Activated CD4-positive, alpha-beta memory T cell treated with anti-CD3 and anti-CD28 coated beads for 36 hours (primary cell): ENCODE measurements at regions of chr12 and their contacts with region 1.

Region 1: DNA sequence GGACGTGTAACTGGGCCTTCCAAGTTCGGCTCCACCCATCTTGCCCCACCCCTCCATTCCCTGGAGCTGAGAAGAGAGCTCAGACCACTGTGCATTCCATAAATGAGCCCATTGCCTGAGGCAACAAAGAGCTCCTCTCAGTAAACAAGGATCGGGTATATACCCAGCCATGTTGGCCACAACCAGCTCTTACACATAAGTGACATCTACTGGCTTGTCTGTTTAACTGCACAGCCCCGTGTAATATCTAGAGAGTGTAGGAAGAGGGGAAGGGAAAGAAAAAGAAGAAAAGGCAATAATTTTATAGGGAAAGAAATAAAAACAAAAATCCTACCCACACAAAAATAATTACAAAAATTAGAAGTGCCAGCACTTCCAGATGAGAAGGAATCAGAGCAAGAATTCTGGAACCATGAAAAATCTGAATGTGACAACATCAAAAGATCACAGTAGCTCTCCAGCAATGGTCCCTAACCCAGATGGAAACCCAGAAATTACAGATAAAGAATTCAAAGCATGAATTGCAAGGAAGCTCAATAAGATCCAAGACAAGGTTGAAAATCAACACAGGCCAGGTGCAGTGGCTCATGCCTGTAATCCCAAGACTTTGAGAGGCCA is 308.1 kb downstream of the RPAP3 start:
- DNase-seq: peak; percentile 64
- H3K4me3 Mint-ChIP-seq: peak overlapping the region; percentile 45
- H3K27ac Mint-ChIP-seq: peak overlapping the region; percentile 100
- H3K4me1 Mint-ChIP-seq: peaks cover 89% of the 10 kb centered on the region
- H3K27me3 Mint-ChIP-seq: no peaks in the 10 kb centered on the region

Region 2: GRCh38 chr12:47032644-47033043 is 365.1 kb before region 1 on chr12:
- CTCF ChIA-PET with region 1: interaction called, 86 read pairs
- POLR2A ChIA-PET with region 1: no interaction called
- intact Hi-C with region 1: loop called (anchors 1 kb)
- DNase-seq: no peak
- H3K4me3 Mint-ChIP-seq: no peak overlapping the region
- H3K27ac Mint-ChIP-seq: no peak overlapping the region
- H3K4me1 Mint-ChIP-seq: peaks cover 37% of the 10 kb centered on the region
- H3K27me3 Mint-ChIP-seq: no peaks in the 10 kb centered on the region

Region 3: GRCh38 chr12:47085815-47086252 is 311.9 kb before region 1 on chr12:
- CTCF ChIA-PET with region 1: interaction called, 25 read pairs
- POLR2A ChIA-PET with region 1: no interaction called
- intact Hi-C with region 1: loop called (anchors 2 kb)
- DNase-seq: peak; percentile 59
- H3K4me3 Mint-ChIP-seq: peak overlapping the region; percentile 47
- H3K27ac Mint-ChIP-seq: peak overlapping the region; percentile 69
- H3K4me1 Mint-ChIP-seq: peaks cover 51% of the 10 kb centered on the region
- H3K27me3 Mint-ChIP-seq: no peaks in the 10 kb centered on the region

Region 4: GRCh38 chr12:47276621-47277309 is 121.0 kb before region 1 on chr12:
- CTCF ChIA-PET with region 1: interaction called, 5 read pairs
- POLR2A ChIA-PET with region 1: interaction called, 4 read pairs
- intact Hi-C with region 1: loop called (anchors 2 kb)
- DNase-seq: peak; percentile 70
- H3K4me3 Mint-ChIP-seq: peak overlapping the region; percentile 33
- H3K27ac Mint-ChIP-seq: peak overlapping the region; percentile 95
- H3K4me1 Mint-ChIP-seq: peaks cover 82% of the 10 kb centered on the region
- H3K27me3 Mint-ChIP-seq: no peaks in the 10 kb centered on the region

Region 5: GRCh38 chr12:47356129-47356700 is 41.6 kb before region 1 on chr12:
- CTCF ChIA-PET with region 1: interaction called, 56 read pairs
- POLR2A ChIA-PET with region 1: interaction called, 36 read pairs
- intact Hi-C with region 1: loop called (anchors 2 kb)
- DNase-seq: peak; percentile 50
- H3K4me3 Mint-ChIP-seq: peak overlapping the region; percentile 66
- H3K27ac Mint-ChIP-seq: peak overlapping the region; percentile 99
- H3K4me1 Mint-ChIP-seq: peaks cover 76% of the 10 kb centered on the region
- H3K27me3 Mint-ChIP-seq: no peaks in the 10 kb centered on the region

Region 6: GRCh38 chr12:47419497-47419896 is 21.7 kb after region 1 on chr12:
- CTCF ChIA-PET with region 1: interaction called, 28 read pairs
- POLR2A ChIA-PET with region 1: interaction called, 4 read pairs
- intact Hi-C with region 1: no loop called
- DNase-seq: no peak
- H3K4me3 Mint-ChIP-seq: no peak overlapping the region
- H3K27ac Mint-ChIP-seq: peak overlapping the region; percentile 60
- H3K4me1 Mint-ChIP-seq: peaks cover 39% of the 10 kb centered on the region
- H3K27me3 Mint-ChIP-seq: no peaks in the 10 kb centered on the region

Region 7: GRCh38 chr12:47527816-47528215 is 130.0 kb after region 1 on chr12:
- CTCF ChIA-PET with region 1: no interaction called
- POLR2A ChIA-PET with region 1: no interaction called
- intact Hi-C with region 1: no loop called
- DNase-seq: no peak
- H3K4me3 Mint-ChIP-seq: no peak overlapping the region
- H3K27ac Mint-ChIP-seq: no peak overlapping the region
- H3K4me1 Mint-ChIP-seq: no peaks in the 10 kb centered on the region
- H3K27me3 Mint-ChIP-seq: peaks cover 9% of the 10 kb centered on the region